H1 (cell line): ENCODE measurements at regions of chr6 and their contacts with region 1.

Region 1: GRCh38 chr6:109382576-109383437 is 540 bp upstream of the CD164 start:
- DNase-seq: peak; percentile 59 to 96
- H3K4me3 ChIP-seq: peak overlapping the region; percentile 67 to 94 (median 80)
- H3K27ac ChIP-seq: peak overlapping the region; percentile 100
- H3K4me1 ChIP-seq: peaks cover 0 to 5% (median 0%) of the 10 kb centered on the region in 4 experiments; a peak in 2 of 7 replicates
- H3K27me3 ChIP-seq: no peaks in the 10 kb centered on the region
- CTCF ChIP-seq: peak in 2 of 3 experiments; percentile 40 to 47; a peak in 3 of 4 replicates
- EP300 ChIP-seq: peak in 1 of 2 experiments; percentile 99; a peak in 2 of 3 replicates
- POLR2A ChIP-seq: peak; percentile 74 to 79; a peak in 2 of 3 replicates
- RAD21 ChIP-seq: peak; percentile 52 to 58

Region 2: GRCh38 chr6:109095027-109095834 is 287.6 kb before region 1 on chr6 and contains the start of gene CEP57L1:
- CTCF ChIA-PET with region 1: no interaction called
- POLR2A ChIA-PET with region 1: interaction called, 10 read pairs
- DNase-seq: peak; percentile 94 to 98
- H3K4me3 ChIP-seq: peak within 1 kb of the TSS; percentile 78 to 95 (median 94)
- H3K27ac ChIP-seq: peak within 1 kb of the TSS; percentile 88
- H3K4me1 ChIP-seq: no peaks in the 10 kb centered on the region
- H3K27me3 ChIP-seq: no peaks in the 10 kb centered on the region
- CTCF ChIP-seq: peak in 2 of 3 experiments; percentile 2 to 9; a peak in 2 of 4 replicates
- EP300 ChIP-seq: no peak
- POLR2A ChIP-seq: no peak; a peak in 1 of 3 replicates
- RAD21 ChIP-seq: no peak
- total RNA-seq, gene CEP57L1: 11.5 and 14.3 TPM in 2 replicates

Region 3: DNA sequence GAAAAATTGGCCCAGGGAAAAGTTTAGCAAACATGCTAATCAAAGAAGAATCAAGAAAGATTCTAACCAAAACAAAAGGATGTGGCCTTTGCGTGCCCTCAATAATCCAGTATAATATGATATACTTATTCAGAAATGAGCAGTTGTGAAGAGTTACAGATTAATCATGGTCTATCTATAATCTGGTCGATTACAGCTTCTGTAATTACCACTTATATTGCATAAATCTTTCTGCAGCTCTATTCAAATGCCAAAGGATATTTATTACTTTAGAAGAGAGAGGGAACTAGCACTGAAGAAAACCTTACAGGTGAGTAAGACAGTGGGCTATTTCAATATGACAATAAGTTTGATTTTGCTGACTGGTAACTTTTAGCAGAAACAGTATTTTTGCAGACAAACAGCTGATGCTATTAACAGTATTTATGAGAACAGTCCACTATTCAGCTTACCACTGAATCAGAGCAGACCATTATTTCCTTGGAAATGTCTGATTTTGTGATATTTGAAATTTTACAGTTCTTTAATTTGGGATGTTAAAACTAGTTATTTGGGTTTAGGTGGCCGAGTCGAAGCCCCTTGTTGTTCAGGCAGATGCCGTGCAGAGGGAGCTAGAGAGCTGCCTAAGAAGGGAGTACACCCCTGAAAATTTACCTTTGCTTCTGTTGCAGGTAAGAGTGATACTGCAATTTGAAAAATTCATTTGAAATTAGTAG is 195.2 kb before region 1 on chr6:
- CTCF ChIA-PET with region 1: interaction called, 60 read pairs
- POLR2A ChIA-PET with region 1: interaction called, 9 read pairs
- DNase-seq: peak; percentile 9 to 78
- H3K4me3 ChIP-seq: no peak overlapping the region
- H3K27ac ChIP-seq: no peak overlapping the region
- H3K4me1 ChIP-seq: peaks cover 0 to 7% (median 2%) of the 10 kb centered on the region in 4 experiments; a peak in 2 of 7 replicates
- H3K27me3 ChIP-seq: no peaks in the 10 kb centered on the region
- CTCF ChIP-seq: peak; percentile 68 to 88 (median 83)
- EP300 ChIP-seq: no peak
- POLR2A ChIP-seq: no peak
- RAD21 ChIP-seq: peak; percentile 95 to 96

Region 4: DNA sequence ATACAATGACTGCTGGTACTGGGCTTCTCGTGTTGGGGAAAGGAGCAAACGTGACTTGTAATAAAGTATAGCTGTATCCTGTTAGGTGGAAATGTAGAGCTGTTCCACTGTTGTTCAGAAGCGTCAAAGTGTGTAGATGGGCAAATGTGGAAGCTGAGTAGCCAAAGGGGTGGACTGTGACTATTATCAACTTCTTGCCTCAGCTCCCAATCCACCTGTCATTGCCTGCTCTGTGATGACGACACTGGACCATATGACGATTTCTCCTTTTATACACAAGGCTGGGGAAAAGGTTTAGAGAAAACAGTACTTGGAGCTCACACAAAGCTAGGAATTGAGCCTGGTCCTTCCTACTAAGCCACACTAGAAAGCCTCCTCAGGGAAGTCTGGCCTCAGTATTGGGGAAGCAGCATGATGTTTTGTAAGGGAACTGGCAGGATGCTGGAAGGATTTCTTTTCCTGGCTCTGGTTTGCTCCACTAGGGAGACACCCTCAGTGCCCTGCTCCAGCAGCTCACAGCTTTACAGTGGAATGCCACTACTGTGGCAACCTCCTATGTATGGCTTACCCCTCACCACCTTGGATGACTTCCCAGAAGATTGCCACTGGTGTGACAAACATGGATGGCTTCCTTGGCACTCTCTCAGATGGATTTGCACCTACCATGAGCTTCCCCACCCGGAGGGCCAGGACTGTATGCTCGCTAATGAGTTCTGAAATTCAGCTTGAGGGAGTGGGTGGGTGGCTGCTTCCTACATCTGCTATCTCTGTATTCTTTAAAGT is 20.5 kb before region 1 on chr6:
- CTCF ChIA-PET with region 1: interaction called, 13 read pairs
- POLR2A ChIA-PET with region 1: interaction called, 4 read pairs
- DNase-seq: no peak
- H3K4me3 ChIP-seq: no peak overlapping the region
- H3K27ac ChIP-seq: no peak overlapping the region
- H3K4me1 ChIP-seq: no peaks in the 10 kb centered on the region
- H3K27me3 ChIP-seq: no peaks in the 10 kb centered on the region
- CTCF ChIP-seq: no peak
- EP300 ChIP-seq: no peak
- POLR2A ChIP-seq: no peak
- RAD21 ChIP-seq: no peak

Region 5: GRCh38 chr6:109372130-109372529 is 10.7 kb before region 1 on chr6:
- CTCF ChIA-PET with region 1: interaction called, 6 read pairs
- POLR2A ChIA-PET with region 1: interaction called, 20 read pairs
- DNase-seq: no peak
- H3K4me3 ChIP-seq: no peak overlapping the region
- H3K27ac ChIP-seq: no peak overlapping the region
- H3K4me1 ChIP-seq: no peaks in the 10 kb centered on the region
- H3K27me3 ChIP-seq: no peaks in the 10 kb centered on the region
- CTCF ChIP-seq: no peak
- EP300 ChIP-seq: no peak
- POLR2A ChIP-seq: no peak
- RAD21 ChIP-seq: no peak

Region 6: DNA sequence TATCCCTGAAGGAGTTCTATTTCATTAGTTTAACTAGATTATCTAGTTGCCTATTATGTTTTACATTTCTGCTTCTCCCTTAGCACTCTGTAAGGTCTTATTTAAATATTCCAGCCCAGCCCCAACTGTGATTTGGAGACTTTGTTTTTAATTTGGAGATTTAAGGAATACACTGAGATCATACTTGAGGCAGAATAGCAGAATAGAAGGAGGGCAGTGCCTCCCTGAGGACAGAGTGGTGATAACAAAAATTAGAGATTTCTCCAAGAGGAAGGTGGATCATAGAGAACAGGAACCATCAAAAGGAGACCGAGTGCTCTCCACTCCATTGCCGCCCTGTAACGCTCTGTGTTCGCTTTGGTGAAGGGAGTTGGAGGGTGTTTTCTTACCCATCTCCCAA is 14.2 kb after region 1 on chr6:
- CTCF ChIA-PET with region 1: interaction called, 62 read pairs
- POLR2A ChIA-PET with region 1: interaction called, 12 read pairs
- DNase-seq: no peak
- H3K4me3 ChIP-seq: no peak overlapping the region
- H3K27ac ChIP-seq: no peak overlapping the region
- H3K4me1 ChIP-seq: no peaks in the 10 kb centered on the region
- H3K27me3 ChIP-seq: no peaks in the 10 kb centered on the region
- CTCF ChIP-seq: peak in 2 of 3 experiments; percentile 29 to 30; a peak in 2 of 4 replicates
- EP300 ChIP-seq: no peak
- POLR2A ChIP-seq: no peak
- RAD21 ChIP-seq: peak; percentile 68 to 71

Region 7: DNA sequence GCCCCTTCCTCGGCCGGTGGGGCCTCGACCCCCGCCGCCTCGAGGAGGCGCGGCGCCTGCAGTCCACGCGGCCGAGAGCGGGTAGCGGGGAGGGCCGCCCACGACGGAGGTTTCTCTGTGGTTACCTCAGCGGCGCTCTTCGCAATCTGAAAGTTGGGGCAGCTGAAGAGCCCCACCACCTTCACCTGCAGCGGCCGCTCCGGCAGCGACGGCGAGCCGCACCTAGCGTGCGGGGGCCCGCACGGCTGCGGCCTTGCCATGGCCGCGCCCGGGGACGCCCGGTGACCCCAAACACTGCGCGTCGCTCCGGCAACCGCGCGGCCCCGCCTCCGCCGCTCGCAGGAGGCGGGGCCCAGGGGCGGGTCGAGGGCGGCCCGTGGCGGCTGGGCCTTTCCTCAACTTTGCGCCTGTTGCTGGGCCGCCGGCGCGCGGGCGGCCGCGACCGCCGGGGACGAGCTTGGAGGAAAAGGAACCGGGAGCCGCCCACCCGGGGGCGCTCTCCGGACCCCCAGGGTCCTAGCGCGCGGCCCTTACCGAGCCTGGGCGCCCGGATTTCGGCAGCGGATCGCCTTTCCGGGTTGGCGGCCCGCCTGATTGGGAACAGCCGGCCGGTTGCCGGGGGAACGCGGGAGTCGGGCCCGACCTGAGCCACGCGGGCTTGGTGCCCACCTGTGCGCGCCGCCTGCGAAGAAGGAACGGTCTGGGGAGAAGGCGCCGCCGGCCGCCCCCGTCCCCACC is 57.7 kb after region 1 on chr6 and contains the starts of genes PPIL6 and SMPD2:
- CTCF ChIA-PET with region 1: interaction called, 10 read pairs
- POLR2A ChIA-PET with region 1: interaction called, 11 read pairs
- DNase-seq: peak; percentile 67 to 86
- H3K4me3 ChIP-seq: peak within 1 kb of the TSS; percentile 76 to 92 (median 90)
- H3K27ac ChIP-seq: peak within 1 kb of the TSS; percentile 56
- H3K4me1 ChIP-seq: peaks cover 2 to 9% (median 5%) of the 10 kb centered on the region in 4 experiments
- H3K27me3 ChIP-seq: peaks cover 0 to 2% (median 0%) of the 10 kb centered on the region in 4 experiments; a peak in 1 of 7 replicates
- CTCF ChIP-seq: peak in 1 of 3 experiments; percentile 16; a peak in 1 of 4 replicates
- EP300 ChIP-seq: no peak
- POLR2A ChIP-seq: peak in 1 of 2 experiments; percentile 54; a peak in 2 of 3 replicates
- RAD21 ChIP-seq: no peak; a peak in 1 of 4 replicates
- total RNA-seq, gene PPIL6: 1.3 and 1.5 TPM in 2 replicates
- total RNA-seq, gene SMPD2: 10.5 and 11.5 TPM in 2 replicates